ENCODE measurements at regions of chr2 and their contacts with region 1.

Region 1: DNA sequence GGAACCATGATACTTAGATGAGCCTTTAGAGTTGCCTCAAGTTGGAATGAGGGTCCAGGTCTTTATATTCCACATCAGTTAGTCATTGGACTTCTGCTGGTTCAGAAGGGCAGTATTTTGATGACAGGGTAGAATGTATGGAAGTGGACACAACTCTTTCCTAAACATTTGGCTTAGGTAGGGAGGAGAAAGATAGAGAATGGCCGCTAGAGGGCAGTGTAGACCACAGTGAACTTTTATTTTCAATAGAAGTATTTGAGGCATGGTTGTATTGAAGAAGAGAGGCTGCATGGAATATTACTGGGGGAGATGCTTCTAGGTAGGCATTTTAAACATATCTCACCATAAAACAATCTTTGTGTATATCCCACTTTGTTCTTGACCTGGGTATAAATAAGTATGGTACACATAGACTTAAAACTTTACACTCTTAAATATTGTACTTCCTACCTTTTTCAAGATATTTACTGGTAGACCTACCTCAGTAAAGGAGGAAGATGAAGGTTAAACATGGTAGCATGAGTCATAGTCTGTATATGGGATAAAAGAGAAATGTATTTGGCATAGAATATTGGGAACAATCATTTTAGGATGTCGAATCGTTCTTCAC is 497.6 kb upstream of the FAM98A start:
- DNase-seq: peak; percentile 64
- H3K4me3 ChIP-seq: no peak overlapping the region
- H3K27ac ChIP-seq: no peak overlapping the region
- H3K4me1 ChIP-seq: peaks cover 19% of the 10 kb centered on the region
- CTCF ChIP-seq: peak; percentile 93

Region 2: DNA sequence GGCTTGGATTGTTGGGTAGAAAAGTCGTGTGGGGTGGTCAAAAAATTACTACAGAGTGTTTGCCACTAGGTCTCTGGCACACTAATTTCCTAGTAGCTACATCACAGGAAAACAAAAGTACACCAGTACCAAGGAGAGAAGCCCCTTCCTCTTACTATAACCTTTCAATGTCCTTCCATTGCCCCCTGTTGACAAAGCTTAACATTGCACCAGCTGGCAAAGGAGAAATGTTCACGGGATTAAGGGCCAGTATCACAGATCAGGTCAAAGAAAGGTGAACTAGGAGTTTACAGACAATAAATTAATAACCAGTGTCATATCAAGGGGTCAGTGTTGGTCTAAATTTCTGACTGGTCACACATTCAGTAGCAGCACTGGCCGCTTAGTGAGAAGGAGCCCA is 642.0 kb after region 1 on chr2:
- CTCF ChIA-PET with region 1: no interaction called
- POLR2A ChIA-PET with region 1: no interaction called
- intact Hi-C with region 1: loop called (anchors 2 kb)
- DNase-seq: peak; percentile 3
- H3K4me3 ChIP-seq: no peak overlapping the region
- H3K27ac ChIP-seq: no peak overlapping the region
- H3K4me1 ChIP-seq: no peaks in the 10 kb centered on the region
- CTCF ChIP-seq: peak; percentile 69